Common myeloid progenitor, CD34-positive (primary cell): ENCODE measurements at regions of chr4 and their contacts with region 1.

Region 1: DNA sequence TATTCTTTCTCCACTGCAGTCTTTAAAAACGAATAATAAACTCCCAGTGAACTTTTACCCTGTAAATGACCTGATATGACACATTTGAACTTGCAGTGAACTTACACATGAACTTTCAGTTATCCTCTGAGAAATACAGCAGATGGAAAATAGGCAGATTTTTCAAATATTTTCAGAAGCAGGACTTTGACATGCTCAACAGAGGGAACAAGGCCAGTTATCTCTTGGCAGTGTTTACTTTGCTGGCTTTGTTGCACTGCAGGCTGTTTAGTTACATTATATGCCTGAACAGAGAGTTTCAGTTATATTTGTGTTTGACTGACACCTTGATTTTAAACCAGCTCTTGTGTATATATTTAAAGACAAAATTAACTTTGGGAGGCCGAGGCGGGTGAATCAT is 47.6 kb upstream of the FGG start:
- DNase-seq: no peak
- H3K4me3 ChIP-seq: no peak overlapping the region
- H3K27ac ChIP-seq: no peak overlapping the region
- H3K4me1 ChIP-seq: no peaks in the 10 kb centered on the region
- H3K27me3 ChIP-seq: no peaks in the 10 kb centered on the region

Region 2: GRCh38 chr4:154526151-154526550 is 133.9 kb before region 1 on chr4:
- CTCF ChIA-PET with region 1: no interaction called
- POLR2A ChIA-PET with region 1: no interaction called
- DNase-seq: peak in 2 of 3 donors; percentile 43 to 50
- H3K4me3 ChIP-seq: no peak overlapping the region
- H3K27ac ChIP-seq: no peak overlapping the region
- H3K4me1 ChIP-seq: peaks cover 0 to 5% (median 0%) of the 10 kb centered on the region in 4 experiments
- H3K27me3 ChIP-seq: peaks cover 0 to 2% (median 0%) of the 10 kb centered on the region in 5 experiments

Region 3: GRCh38 chr4:154545689-154546088 is 114.4 kb before region 1 on chr4:
- CTCF ChIA-PET with region 1: no interaction called
- POLR2A ChIA-PET with region 1: no interaction called
- DNase-seq: no peak
- H3K4me3 ChIP-seq: no peak overlapping the region
- H3K27ac ChIP-seq: no peak overlapping the region
- H3K4me1 ChIP-seq: peaks cover 8 to 17% (median 12%) of the 10 kb centered on the region in 4 experiments
- H3K27me3 ChIP-seq: no peaks in the 10 kb centered on the region

Region 4: GRCh38 chr4:154686838-154687237 is 26.8 kb after region 1 on chr4:
- CTCF ChIA-PET with region 1: no interaction called
- POLR2A ChIA-PET with region 1: interaction called, 10 read pairs
- DNase-seq: peak; percentile 1 to 6 (median 2)
- H3K4me3 ChIP-seq: no peak overlapping the region
- H3K27ac ChIP-seq: no peak overlapping the region
- H3K4me1 ChIP-seq: no peaks in the 10 kb centered on the region
- H3K27me3 ChIP-seq: no peaks in the 10 kb centered on the region